MCF 10A (cell line): ENCODE measurements at regions of chr11 and their contacts with region 1.

Region 1: DNA sequence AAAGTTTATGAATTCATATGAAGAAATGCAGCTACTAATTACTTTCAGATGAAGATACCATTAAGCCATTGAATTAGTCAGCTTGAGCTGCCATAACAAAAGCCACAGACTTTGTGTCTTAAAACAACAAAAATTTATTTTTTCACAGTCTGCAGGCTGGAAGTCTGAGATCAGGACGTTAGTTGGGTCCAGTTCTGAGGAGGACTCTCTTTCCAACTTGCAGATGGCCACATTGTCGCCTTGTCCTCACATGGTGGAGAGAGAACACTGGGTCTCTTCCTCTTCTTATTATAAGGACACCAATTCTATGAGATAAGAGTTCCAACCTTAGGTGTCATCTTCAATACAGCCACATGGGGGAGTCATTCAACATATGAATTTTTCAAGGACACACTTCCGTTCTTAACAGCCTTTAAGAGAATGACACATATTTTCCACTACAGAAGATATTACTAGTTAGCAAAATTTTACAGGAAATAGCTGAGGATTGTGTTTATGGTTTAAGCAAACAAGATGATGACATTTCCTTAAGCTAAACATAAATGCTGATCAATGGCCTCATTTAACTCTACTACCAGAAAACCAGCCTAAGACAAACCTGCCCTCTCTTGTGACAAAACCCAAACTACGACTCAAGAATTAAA is 56.0 kb downstream of the DCUN1D5 start:
- DNase-seq: peak; percentile 70
- H3K4me3 Mint-ChIP-seq: no peak overlapping the region
- H3K27ac Mint-ChIP-seq: no peak overlapping the region
- H3K4me1 Mint-ChIP-seq: no peaks in the 10 kb centered on the region
- H3K27me3 Mint-ChIP-seq: no peaks in the 10 kb centered on the region
- CTCF ChIP-seq: peak; percentile 45

Region 2: DNA sequence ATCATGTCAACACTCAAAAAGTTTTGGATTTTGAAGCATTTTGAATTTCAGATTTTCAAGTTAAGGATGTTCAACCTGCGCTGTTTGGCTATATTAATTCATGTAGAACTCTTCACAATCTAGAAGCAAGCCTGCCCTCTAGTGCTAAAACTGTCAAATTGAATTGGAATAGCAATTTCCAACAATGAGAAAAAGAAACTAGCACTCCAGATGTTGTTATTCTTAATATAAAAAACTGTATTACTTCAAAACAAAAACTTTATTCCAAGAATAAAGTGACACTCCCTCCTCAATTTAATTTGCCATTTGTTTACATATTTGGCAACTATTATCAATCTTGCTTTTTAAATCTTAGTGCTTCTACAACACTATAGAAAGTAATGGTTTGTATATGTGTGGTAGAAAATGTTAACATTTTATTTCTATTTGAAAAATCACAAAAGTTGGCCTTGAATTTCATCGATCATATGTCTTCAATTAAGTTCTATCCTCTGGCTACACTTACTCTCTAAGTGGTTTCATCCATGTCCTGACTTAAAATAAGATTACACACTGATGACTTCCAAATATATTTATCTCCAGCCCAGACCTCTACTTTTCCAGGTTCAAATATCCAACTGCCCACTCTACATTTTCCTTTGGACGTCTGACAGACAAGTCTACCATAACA is 19.4 kb after region 1 on chr11:
- CTCF ChIA-PET with region 1: interaction called, 14 read pairs
- POLR2A ChIA-PET with region 1: interaction called, 3 read pairs
- intact Hi-C with region 1: no loop called
- DNase-seq: peak; percentile 42
- H3K4me3 Mint-ChIP-seq: no peak overlapping the region
- H3K27ac Mint-ChIP-seq: no peak overlapping the region
- H3K4me1 Mint-ChIP-seq: no peaks in the 10 kb centered on the region
- H3K27me3 Mint-ChIP-seq: no peaks in the 10 kb centered on the region
- CTCF ChIP-seq: peak; percentile 36